Activated T-helper 2 cell treated with anti-CD3 and anti-CD28 coated beads, Interferon-gamma antibody, Interleukin-2, Interleukin-4, amounts not matched to agents 10 μg/mL and 5 μg/mL and 100 μg/mL, durations not matched to agents 14 hours and 24 hours and 36 hours (primary cell): ENCODE measurements at regions of chr1 and their contacts with region 1.

Region 1: DNA sequence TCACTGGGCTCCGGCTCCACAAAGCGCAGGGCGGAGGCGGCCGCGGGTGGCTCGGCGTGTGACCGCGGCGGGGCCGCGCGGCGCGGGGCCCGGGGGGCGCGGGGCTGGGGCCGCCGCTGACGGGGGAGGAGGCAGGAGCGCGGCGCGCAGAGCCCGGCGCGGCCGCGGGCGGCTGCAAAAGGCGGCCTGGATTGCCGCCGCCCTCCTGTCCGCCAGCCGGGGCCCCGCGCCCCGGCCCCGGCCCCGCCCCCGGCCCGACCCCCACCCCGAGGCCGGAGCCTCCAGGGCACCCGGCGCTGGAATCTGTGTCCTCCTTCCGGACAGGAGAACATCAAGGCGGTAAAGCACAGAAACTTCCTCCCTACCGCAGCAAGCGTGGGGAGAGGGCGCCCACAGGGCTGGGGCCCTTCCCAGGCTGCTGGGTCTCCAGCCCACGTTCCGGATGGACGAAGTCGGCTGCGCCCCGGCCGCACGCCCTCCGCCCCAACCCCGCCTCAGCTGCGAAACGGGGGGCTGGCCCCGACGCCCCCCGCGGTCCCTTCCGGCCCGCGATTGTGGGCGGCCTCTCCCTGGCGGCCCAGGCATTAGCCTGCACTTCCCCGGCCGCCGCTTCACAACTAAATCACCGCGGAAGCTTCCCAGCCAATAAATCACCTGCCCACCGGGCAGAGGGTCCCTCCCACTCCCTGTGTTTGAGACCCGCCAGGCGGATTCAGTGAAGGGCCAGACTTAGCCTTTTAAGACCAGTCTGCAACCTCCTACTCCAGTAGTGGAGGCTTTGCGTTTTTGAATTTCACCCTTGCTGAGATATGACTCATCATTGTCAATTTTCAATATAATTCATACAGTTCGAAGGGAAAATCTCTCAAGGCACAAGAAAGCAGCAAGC is 106.0 kb downstream of the SLC45A1 start:
- DNase-seq: peak; percentile 43
- H3K4me3 Mint-ChIP-seq: peak overlapping the region; percentile 84
- H3K27ac Mint-ChIP-seq: peak overlapping the region; percentile 92
- H3K4me1 Mint-ChIP-seq: peaks cover 43% of the 10 kb centered on the region
- H3K27me3 Mint-ChIP-seq: no peaks in the 10 kb centered on the region

Region 2: DNA sequence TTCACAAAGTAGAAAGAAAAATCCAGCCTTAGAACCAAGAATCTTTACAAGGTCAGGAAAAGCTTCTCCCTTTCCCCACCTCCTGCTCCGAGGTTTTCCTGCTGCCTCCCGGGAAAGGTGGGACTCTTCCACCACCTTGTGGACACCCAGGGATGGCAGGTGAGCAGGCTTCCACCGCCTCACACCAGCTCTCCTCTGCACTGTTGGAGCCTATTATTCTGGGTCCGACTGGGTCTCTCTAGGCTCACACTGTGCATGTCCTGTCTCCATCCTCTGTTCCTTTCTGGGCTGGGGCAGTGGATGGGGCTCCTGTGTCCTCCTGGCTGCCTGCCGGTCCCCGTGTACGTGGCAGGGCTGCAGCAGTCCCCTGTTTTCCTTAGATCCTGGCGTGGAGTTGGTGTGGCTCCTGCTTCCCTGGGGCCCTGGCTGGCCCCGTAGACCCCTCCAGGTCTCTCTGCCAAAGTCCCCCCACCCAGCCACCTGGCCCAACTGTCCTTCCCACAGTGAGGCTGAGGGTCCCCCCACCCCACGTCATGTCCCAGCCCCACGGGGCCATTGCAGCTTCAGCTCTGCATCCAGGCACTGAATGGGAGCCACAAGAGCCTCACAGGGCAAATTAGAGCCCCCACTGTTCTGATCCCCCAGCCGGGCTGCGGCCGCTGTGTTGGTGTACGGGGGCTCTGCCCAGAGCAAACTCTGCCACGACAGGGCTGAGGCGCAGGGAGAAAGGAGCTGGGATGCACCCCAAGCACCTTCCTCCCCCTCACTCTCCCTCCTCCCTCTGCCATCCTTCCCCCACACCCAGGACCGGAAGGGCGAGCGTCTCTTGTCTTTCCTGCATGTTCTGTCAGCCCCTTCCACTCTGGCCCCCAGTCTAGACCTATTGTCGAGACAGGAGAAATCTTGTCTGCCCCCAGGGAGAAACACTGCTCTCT is 109.3 kb before region 1 on chr1:
- intact Hi-C with region 1: no loop called
- DNase-seq: no peak
- H3K4me3 Mint-ChIP-seq: no peak overlapping the region
- H3K27ac Mint-ChIP-seq: no peak overlapping the region
- H3K4me1 Mint-ChIP-seq: peaks cover 12% of the 10 kb centered on the region
- H3K27me3 Mint-ChIP-seq: peaks cover 32% of the 10 kb centered on the region

Region 3: DNA sequence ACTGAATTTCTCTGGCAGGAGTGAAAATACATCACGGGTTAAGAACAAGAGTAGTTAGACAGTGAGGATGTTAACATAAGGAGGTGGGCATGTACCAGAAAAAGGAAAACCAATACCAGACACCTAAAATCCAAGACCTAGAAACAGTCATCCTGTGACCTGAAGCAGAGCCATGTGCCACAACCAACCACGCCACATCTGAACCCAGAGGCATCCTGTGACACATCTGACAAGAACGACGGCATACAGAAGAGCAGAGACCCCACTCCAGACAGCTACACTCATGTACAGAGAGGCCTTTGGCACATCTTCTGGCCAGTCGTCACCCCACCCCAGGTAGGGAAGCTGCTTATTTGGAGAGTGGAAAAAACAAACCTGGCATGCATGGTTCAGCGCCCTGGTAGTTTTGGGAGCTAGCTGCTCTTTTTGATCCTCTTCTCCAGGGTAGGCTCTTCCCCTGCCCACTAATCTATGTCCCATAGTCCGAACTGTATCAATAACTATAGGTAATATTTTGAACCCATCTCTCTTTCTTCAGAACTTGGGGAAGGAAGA is 33.8 kb before region 1 on chr1:
- intact Hi-C with region 1: loop called (anchors 5 kb)
- DNase-seq: no peak
- H3K4me3 Mint-ChIP-seq: no peak overlapping the region
- H3K27ac Mint-ChIP-seq: no peak overlapping the region
- H3K4me1 Mint-ChIP-seq: peaks cover 42% of the 10 kb centered on the region
- H3K27me3 Mint-ChIP-seq: no peaks in the 10 kb centered on the region

Region 4: DNA sequence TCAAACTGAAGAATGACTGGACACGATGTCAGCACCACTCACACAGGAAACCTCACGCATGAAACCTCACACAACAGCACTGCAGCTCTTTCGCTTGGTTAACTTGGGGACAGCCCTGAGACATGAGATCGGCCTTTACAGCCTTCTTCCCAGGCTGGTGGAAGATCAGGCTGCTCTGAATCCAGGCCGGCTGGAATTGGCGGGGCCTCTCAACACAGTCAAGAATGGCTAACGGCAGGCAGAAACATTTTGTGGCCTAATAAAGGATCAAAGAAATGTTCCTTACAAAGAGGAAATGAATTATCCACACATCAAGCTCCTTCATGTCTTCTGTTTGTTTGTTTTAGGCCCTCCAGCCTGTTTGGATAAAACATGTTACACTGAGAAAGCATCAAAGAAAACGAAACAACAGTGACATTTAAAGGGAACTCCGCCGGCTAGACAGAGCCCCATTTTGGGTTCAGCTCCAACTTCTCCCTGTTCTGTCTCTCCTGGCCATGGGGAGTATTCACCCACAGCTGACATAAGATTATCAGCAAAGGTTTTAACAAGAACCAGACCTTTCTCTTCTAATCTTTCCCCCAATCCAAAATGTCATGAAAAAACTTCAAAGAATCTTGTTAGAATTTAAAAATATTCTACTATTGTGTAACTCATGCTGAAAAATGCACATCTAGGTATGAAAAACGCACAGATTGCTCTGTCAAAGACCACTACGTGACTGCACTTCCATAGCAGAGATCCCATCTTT is 25.2 kb after region 1 on chr1:
- intact Hi-C with region 1: loop called (anchors 2 kb)
- DNase-seq: no peak
- H3K4me3 Mint-ChIP-seq: no peak overlapping the region
- H3K27ac Mint-ChIP-seq: no peak overlapping the region
- H3K4me1 Mint-ChIP-seq: peaks cover 27% of the 10 kb centered on the region
- H3K27me3 Mint-ChIP-seq: no peaks in the 10 kb centered on the region

Region 5: GRCh38 chr1:8510041-8510823 is 86.3 kb after region 1 on chr1:
- intact Hi-C with region 1: loop called (anchors 2 kb)
- DNase-seq: peak; percentile 32
- H3K4me3 Mint-ChIP-seq: peak overlapping the region; percentile 48
- H3K27ac Mint-ChIP-seq: peak overlapping the region; percentile 81
- H3K4me1 Mint-ChIP-seq: peaks cover 41% of the 10 kb centered on the region
- H3K27me3 Mint-ChIP-seq: no peaks in the 10 kb centered on the region

Region 6: GRCh38 chr1:8604041-8604945 is 180.4 kb after region 1 on chr1:
- intact Hi-C with region 1: loop called (anchors 5 kb)
- DNase-seq: peak; percentile 46
- H3K4me3 Mint-ChIP-seq: peak overlapping the region; percentile 72
- H3K27ac Mint-ChIP-seq: peak overlapping the region; percentile 93
- H3K4me1 Mint-ChIP-seq: peaks cover 52% of the 10 kb centered on the region
- H3K27me3 Mint-ChIP-seq: no peaks in the 10 kb centered on the region

Region 7: DNA sequence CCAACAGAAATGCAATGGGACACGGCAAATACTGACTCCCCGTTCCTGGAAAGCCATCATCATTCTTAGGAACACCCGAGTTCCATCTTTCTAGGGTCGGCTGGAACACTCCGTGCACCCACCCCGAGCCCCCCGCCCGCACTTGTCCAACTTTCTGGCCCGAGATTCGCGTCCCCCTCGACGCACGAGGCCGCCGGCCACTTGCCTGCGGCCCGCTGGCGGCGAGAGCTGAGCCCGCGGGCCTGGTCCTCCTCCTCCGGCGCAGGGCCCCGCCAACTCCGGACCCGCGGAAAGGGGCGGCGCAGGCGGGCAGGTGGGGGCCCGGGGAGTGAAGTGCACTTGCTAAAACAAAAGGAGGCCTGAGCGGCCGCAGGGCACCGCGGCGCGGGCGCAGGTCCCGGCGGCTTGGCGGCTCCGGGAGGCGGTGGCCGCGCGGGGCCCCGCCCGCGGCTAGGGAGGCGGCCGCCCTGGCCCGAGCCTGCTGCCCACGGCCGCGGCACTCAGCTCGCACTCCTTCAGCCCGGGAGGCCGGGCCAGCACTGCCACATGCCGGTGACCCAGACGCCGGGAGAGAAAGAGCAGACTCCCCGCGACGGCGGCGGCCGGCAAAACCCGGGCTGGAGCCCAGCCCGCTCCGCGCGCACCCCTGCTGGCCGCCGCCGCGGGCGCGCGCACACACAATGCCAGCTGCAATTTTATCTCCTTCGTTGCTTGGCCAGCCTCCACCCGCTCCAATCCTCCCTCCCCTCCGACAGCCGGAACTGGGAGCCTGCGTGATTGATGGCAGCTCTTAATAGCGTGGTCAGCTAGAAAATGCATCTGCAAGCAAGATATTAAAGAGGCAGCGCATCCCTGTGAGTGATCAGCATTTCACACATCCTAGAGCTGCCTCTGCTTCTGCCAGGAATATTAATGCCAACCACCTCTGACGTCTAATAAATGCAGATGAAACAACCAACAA is 279.2 kb after region 1 on chr1:
- intact Hi-C with region 1: loop called (anchors 2 kb)
- DNase-seq: peak; percentile 73
- H3K4me3 Mint-ChIP-seq: peak overlapping the region; percentile 88
- H3K27ac Mint-ChIP-seq: peak overlapping the region; percentile 87
- H3K4me1 Mint-ChIP-seq: peaks cover 46% of the 10 kb centered on the region
- H3K27me3 Mint-ChIP-seq: no peaks in the 10 kb centered on the region